Aorta (tissue), 5 donors: ENCODE measurements at regions of chr6 and their contacts with region 1.

Region 1: GRCh38 chr6:18122124-18123093 is at the start of gene NHLRC1:
- DNase-seq: peak; percentile 95 to 97
- ATAC-seq: peak; percentile 99
- H3K4me3 ChIP-seq: peak within 1 kb of the TSS in 1 of 2 donors; percentile 27
- H3K27ac ChIP-seq: peak within 1 kb of the TSS in 1 of 2 donors; percentile 8
- H3K4me1 ChIP-seq: no peaks in the 10 kb centered on the region
- H3K27me3 ChIP-seq: no peaks in the 10 kb centered on the region
- total RNA-seq, gene NHLRC1: 0.94 to 1.6 TPM

Region 2: DNA sequence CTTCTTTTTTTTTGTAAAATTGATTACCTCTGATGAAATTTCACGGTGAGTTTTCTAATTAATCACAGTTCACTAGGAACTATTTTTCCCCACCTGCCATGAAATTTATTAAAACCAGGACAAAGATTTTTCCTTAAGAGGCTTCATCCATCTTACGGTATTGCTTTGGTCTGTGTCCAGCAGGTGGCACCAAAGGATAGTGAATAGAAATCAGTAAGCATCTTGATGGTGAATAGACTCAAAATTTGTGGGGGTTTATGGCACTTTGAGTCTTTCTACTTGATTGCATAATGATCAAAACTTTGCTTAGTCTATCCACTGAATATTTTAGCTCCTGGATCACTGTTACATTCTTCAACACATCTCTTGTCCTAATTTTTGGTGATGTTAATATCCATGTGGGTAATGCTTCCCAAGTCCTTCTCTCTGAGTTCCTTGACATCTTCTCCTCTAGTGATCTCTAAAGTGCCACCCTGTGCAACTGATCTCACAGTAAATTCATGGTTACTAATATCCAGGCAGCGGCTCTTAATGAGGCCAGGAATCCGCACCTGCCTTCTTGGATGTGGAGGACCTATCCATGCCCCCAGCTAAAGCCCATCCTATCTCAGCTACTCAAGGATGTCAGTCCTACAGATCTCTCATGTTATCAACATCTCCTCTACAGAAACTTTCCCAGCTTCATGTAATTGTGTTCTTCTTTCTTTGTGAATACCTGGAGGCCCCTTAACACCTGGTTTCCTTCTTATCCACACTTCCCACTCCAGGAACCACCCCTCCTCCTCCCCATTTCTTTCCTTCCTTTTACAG is 966.1 kb before region 1 on chr6:
- intact Hi-C with region 1: loop called in 1 of 2 experiments (anchors 10 kb)
- DNase-seq: no peak
- ATAC-seq: peak; percentile 63
- H3K4me3 ChIP-seq: no peak overlapping the region
- H3K27ac ChIP-seq: no peak overlapping the region
- H3K4me1 ChIP-seq: no peaks in the 10 kb centered on the region
- H3K27me3 ChIP-seq: no peaks in the 10 kb centered on the region

Region 3: DNA sequence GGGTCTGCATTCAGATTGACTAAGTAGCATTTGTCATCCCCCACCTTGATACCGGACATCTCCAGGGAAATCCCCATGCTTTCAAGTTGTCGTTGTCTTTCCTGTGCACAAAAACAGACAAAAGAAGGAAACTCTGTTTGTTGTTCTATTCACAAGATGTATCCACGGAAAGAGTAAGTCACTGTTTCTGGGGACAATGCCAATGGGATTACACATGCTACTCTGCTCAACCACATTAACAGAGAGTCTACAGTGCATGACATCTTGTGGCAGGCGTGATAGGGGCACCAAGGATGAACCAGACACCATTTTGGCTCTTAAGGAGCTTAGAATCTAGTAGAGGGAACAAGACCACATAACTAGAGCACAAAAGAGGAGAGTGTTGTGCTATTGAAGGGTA is 291.3 kb before region 1 on chr6:
- intact Hi-C with region 1: loop called in 1 of 2 experiments (anchors 5 kb)
- DNase-seq: no peak
- ATAC-seq: peak; percentile 63
- H3K4me3 ChIP-seq: no peak overlapping the region
- H3K27ac ChIP-seq: no peak overlapping the region
- H3K4me1 ChIP-seq: no peaks in the 10 kb centered on the region
- H3K27me3 ChIP-seq: no peaks in the 10 kb centered on the region

Region 4: DNA sequence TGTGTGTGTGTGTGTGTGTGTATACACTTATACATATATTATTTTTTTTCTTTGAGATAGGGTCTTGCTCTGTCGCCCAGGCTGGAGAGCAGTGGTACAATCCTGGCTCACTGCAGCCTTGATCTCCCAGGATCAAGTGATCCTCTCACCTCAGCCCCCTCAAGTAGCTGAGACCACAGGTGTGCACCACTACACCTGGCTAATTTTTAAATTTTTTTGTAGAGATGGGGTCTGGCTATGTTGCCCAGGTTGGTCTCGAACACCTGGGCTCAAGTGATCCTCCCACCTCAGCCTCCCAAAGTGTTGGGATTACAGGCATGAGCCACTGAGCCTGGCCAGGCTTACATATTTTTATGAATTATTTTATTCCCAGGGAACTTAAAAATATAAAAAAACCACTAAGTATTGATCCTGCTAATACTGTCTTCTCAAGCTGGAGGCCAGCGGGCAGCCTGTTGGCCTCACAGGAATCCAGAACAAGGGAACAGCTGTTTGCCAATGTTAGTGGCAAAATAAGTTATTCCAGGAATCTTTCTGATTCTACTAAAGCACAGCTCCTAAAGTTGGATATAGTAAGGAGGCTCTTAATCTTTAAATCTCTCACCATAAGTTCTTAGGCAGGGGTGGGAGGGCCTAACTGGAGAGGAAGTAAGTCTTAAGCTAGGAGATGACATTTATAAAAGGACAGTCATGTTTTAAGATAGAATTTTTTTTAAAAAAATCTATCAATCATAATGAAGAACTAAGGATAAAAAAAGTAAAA is 280.2 kb before region 1 on chr6:
- intact Hi-C with region 1: loop called in 1 of 2 experiments (anchors 5 kb)
- DNase-seq: no peak
- ATAC-seq: no peak
- H3K4me3 ChIP-seq: no peak overlapping the region
- H3K27ac ChIP-seq: no peak overlapping the region
- H3K4me1 ChIP-seq: peaks cover 2 to 3% of the 10 kb centered on the region in 2 donors
- H3K27me3 ChIP-seq: no peaks in the 10 kb centered on the region

Region 5: GRCh38 chr6:17987576-17988421 is 134.6 kb before region 1 on chr6 and contains the start of gene KIF13A:
- intact Hi-C with region 1: loop called (anchors 2 to 5 kb)
- DNase-seq: peak; percentile 80 to 90
- ATAC-seq: peak; percentile 83
- H3K4me3 ChIP-seq: peak within 1 kb of the TSS; percentile 72 to 86
- H3K27ac ChIP-seq: peak within 1 kb of the TSS; percentile 82 to 98
- H3K4me1 ChIP-seq: no peaks in the 10 kb centered on the region
- H3K27me3 ChIP-seq: no peaks in the 10 kb centered on the region
- total RNA-seq, gene KIF13A: 89.2 to 109 TPM

Region 6: DNA sequence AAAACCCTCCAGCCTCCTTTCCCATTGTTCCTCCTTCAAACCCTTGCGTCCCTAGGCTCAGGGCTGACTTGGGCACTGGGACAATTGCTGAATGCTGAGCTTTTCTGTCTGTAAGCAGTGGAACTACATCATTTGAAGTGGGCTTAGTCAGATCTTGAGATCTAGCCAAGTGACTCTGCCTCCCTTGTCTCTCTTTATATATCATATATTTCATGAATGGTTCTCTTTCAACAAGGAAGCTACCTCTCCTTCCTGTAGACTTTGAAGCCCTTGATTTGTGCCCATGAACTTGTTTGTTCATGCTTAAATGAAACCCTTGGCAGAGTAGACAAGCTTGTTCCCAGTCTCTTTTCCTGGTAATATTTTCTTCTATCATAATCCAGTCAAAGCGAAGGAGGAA is 75.0 kb before region 1 on chr6:
- intact Hi-C with region 1: loop called in 1 of 2 experiments (anchors 5 kb)
- DNase-seq: no peak
- ATAC-seq: no peak
- H3K4me3 ChIP-seq: no peak overlapping the region
- H3K27ac ChIP-seq: peak overlapping the region; percentile 26 to 48
- H3K4me1 ChIP-seq: peaks cover 4 to 10% of the 10 kb centered on the region in 2 donors
- H3K27me3 ChIP-seq: no peaks in the 10 kb centered on the region